ENCODE measurements at regions of chr14 and their contacts with region 1.

Region 1: DNA sequence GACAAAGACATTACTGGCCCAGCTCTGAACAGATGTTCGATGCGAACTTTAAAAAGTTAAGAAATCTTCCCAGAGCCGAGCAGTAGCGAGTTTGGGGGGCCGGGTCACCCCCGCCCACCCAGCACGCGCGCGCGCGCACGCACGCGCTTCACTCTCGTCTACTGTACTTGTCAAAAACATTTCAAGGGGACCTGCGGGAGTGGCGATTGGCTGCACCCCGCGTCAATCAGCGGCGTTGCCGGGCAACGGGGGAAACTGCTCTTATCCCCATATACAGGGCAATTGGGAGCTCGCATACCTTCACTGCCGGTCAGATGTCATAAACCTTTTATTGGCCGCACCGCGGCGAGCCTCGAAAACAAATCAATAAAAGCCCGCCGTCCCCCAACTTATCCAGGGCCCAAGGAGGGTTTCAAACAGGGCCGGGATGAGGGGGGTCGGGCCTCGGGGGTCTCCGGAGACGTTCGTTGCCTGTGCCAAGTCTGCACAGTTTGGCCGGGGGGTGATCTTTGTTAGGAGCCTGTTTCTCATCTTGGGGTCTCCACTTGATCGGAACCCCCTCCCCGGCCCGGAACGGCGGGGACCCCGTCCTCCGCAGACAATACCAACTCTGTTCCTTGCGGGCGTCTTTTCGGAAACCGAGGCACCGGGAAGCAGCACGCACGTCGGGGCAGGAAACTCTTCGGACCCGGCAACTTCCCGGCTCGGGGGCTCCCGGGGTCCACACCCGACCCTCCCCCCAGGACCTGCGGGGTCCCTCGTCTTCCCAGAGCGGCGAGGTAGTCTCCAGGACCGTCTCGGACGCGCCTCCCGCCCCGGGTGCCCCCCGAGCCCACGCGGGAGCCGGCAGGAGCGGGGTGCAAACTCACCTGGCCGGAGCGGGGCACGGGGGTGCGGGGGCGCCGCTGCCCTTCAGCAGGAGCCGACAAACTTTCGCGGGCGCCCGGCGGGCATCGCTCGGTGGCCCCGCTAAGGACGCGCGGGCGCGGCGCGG is 734 bp downstream of the FOXN3 start:
- DNase-seq: peak; percentile 99
- H3K4me3 ChIP-seq: peak overlapping the region; percentile 77 to 99 (median 94)
- H3K27ac ChIP-seq: peak overlapping the region; percentile 96 to 99 (median 98)
- H3K4me1 ChIP-seq: peaks cover 0 to 37% (median 20%) of the 10 kb centered on the region in 4 donors
- H3K27me3 ChIP-seq: no peaks in the 10 kb centered on the region
- CTCF ChIP-seq: no peak
- EP300 ChIP-seq: peak in 1 of 4 donors; percentile 52
- POLR2A ChIP-seq: peak; percentile 14 to 21

Region 2: GRCh38 chr14:89178802-89179535 is 237.3 kb before region 1 on chr14:
- intact Hi-C with region 1: loop called (anchors 2 kb)
- DNase-seq: no peak
- H3K4me3 ChIP-seq: no peak overlapping the region
- H3K27ac ChIP-seq: peak overlapping the region in 2 of 4 donors; percentile 0 to 51
- H3K4me1 ChIP-seq: peaks cover 0 to 31% (median 22%) of the 10 kb centered on the region in 4 donors
- H3K27me3 ChIP-seq: no peaks in the 10 kb centered on the region
- CTCF ChIP-seq: no peak
- EP300 ChIP-seq: no peak
- POLR2A ChIP-seq: no peak

Region 3: GRCh38 chr14:89384023-89384422 is 32.3 kb before region 1 on chr14:
- intact Hi-C with region 1: loop called (anchors 2 kb)
- DNase-seq: peak; percentile 45
- H3K4me3 ChIP-seq: no peak overlapping the region
- H3K27ac ChIP-seq: no peak overlapping the region
- H3K4me1 ChIP-seq: peaks cover 0 to 68% (median 52%) of the 10 kb centered on the region in 4 donors
- H3K27me3 ChIP-seq: no peaks in the 10 kb centered on the region
- CTCF ChIP-seq: no peak
- EP300 ChIP-seq: no peak
- POLR2A ChIP-seq: no peak

Region 4: DNA sequence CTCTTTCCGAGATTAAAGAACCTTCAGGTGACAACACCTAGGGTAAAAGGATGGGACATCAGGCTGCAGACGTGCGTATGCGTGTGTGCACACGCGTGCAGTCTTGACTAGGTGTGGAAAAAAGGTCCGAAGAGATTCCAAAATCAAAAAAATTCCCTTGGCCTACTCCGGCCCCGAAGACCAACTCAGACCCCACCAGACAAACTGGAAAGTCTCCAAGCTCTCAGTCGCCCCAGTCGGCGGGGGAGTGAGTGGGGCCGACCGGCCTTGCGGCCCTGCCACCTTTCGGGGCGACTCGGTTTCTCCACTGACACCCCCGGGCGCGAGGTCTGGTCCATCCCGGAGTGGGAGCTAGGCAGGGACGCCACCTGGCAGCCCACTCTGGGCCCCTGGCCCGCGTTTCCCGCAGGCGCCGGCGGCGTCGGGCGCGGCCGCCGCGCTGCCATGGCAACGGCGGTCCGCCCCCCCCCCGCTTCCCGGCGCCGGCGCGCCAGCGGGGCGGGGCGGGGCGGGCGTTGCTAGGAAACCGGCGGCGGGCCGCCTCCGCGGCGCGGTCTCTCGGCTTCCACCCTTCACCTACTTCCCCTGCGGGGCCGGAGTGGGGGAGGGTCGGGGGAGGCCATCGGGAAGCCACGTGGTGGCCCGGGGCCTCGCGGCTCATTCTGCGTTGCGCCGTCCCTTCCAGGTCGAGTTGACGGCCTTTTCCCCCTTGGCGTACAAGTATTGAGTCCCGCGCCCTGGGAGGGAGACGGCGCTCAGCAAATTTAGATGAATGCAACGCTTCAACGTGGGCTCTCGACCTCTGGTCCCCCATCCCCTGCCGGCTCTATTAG is 285.1 kb after region 1 on chr14:
- intact Hi-C with region 1: loop called (anchors 5 kb)
- DNase-seq: peak; percentile 92
- H3K4me3 ChIP-seq: peak overlapping the region; percentile 45 to 62 (median 56)
- H3K27ac ChIP-seq: peak overlapping the region; percentile 64 to 83 (median 76)
- H3K4me1 ChIP-seq: peaks cover 0 to 19% (median 16%) of the 10 kb centered on the region in 4 donors
- H3K27me3 ChIP-seq: no peaks in the 10 kb centered on the region
- CTCF ChIP-seq: no peak
- EP300 ChIP-seq: peak in 2 of 4 donors; percentile 44 to 53
- POLR2A ChIP-seq: no peak